Gastrocnemius medialis (tissue), 4 donors: ENCODE measurements at regions of chr20 and their contacts with region 1.

Region 1: DNA sequence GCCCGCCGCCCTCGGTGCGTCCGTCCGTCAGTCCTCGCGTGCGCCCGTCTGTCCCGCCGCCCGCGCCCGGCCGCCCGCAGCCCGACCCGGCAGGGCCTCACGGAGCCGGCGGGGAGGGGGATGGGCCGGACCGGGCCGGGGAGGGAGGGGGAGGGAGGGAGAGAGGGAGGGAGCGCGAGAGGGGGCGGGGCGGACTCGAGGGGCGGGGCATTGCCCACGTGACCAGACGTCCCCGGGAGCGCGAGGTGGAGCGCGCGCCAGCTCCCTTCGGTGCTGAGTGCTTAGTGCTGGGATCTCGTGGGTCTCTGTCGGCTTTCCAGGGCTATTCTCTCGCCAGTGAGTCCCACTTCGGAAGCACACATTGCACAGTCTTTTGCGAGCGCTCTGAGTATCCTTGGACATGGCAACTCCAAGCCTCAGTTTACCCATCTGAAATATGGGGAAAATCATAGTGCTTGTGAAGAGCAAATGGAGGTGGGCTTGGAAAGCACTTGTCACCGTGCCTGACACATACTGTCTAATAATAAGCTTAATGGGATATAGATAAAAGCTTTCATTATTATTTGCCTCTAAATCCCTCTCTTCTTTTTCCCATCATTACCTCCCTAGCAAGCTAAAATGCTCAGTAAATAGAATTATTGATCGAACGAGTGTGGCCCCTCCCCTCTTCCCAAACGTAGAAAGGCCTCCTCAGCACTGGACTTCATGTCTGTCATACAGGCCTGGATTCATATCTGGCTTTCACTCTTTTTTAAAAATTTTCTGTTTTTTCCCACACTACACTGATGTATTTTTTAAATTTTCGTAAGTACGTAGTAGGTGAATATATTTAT is at the start of gene NCOA6:
- DNase-seq: peak; percentile 86 to 90
- ATAC-seq: peak; percentile 81 to 86
- H3K4me3 ChIP-seq: peak within 1 kb of the TSS; percentile 76 to 93 (median 88)
- H3K27ac ChIP-seq: peak within 1 kb of the TSS; percentile 84 to 97 (median 94)
- H3K4me1 ChIP-seq: peaks cover 31 to 33% of the 10 kb centered on the region in 2 donors
- H3K27me3 ChIP-seq: no peaks in the 10 kb centered on the region
- CTCF ChIP-seq: no peak
- POLR2A ChIP-seq: peak in 1 of 2 donors; percentile 71
- total RNA-seq, gene NCOA6: 10.9 to 12.7 (median 11.6) TPM

Region 2: DNA sequence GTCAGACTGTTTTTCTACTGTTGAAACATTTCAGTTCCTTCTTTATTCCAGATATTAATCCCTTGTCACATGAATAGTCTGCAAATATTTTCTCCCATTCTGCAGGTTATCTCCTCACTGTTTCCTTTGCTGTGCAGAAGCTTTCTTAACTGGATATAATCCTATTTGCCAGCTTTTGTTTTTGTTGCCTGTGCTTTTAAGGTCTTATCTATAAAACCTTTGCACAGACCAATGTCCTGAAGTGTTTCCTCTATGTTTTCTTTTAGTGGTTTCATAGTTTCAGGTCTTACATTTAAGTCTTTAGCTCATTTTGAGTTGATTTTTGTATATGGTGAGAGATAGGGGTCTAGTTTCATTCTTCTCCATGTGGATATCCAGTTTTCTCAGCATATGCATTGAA is 19.5 kb before region 1 on chr20:
- in situ Hi-C with region 1: no loop called
- intact Hi-C with region 1: no loop called
- DNase-seq: no peak
- ATAC-seq: no peak
- H3K4me3 ChIP-seq: no peak overlapping the region
- H3K27ac ChIP-seq: no peak overlapping the region
- H3K4me1 ChIP-seq: peaks cover 0 to 4% of the 10 kb centered on the region in 2 donors
- H3K27me3 ChIP-seq: no peaks in the 10 kb centered on the region
- CTCF ChIP-seq: no peak
- POLR2A ChIP-seq: no peak

Region 3: DNA sequence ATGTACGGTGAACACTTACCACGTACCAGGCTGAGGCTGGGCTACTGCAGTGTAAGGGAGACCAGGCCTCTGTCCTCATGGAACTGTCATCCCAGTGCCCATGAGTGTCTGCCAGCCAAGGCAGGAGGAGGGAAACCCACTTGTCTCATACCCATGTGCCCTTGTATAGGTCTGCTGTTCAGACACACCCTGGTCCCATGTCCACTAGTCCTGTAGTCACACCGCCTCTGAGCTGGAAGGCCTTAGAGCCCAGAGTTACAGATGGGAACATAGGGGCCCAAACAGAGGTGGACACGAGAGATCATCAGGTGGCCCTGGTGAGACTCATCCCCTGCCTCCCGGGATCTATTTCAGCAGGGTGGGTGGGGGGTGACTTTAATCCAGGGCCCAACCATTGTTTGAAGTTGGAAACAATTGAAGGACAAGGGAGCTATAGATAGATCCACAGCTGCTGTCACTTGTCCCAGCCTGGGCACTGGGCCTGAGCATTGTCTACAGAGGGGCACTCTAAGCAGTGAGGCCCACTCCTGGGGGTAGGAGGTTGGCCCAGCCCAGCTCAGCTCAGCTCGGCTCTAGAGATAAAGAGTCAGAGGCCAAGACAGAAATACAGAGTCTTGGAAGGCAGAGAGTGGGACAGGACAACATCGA is 144.6 kb after region 1 on chr20:
- in situ Hi-C with region 1: no loop called
- intact Hi-C with region 1: no loop called
- DNase-seq: peak in 1 of 2 donors; percentile 29
- ATAC-seq: peak; percentile 16 to 19
- H3K4me3 ChIP-seq: no peak overlapping the region
- H3K27ac ChIP-seq: peak overlapping the region; percentile 49 to 72 (median 62)
- H3K4me1 ChIP-seq: peaks cover 11 to 19% of the 10 kb centered on the region in 2 donors
- H3K27me3 ChIP-seq: no peaks in the 10 kb centered on the region
- CTCF ChIP-seq: no peak
- POLR2A ChIP-seq: no peak

Region 4: DNA sequence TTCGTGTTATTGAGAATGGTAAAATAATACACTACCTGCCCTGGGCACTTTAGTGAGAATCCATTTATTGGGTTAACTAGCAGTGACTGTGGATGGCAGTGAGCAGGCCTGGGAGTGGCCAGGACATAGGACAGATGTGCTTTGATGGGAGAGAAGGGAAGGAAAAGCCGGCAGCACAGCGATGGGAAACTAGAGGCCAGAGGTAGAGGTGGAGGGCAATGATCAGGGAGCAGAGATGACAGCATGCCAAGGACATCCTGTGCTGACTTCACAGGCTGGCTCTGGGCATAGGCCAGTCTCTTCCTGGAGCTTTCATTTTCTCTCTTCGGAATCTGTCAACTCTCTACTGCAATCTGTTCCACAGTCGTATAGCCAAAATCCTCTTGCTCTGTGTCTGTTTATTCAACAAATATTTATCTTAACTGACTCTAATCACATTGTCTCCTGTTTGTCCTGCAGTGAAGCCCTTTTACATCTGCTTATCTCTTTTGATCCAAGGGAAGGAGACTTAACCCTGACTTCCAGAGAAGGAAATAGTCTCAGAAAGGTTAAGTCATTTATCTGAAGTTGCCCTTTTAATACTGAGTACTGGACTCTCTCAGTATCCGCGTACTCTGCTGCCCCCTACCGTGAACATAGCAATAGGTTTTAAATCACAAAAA is 382.3 kb after region 1 on chr20:
- in situ Hi-C with region 1: loop called in 2 of 4 experiments (anchors 10 to 25 kb)
- intact Hi-C with region 1: no loop called
- DNase-seq: peak; percentile 53 to 67
- ATAC-seq: peak; percentile 90 to 95
- H3K4me3 ChIP-seq: peak overlapping the region in 3 of 4 donors; percentile 1 to 37 (median 23)
- H3K27ac ChIP-seq: peak overlapping the region; percentile 55 to 77 (median 60)
- H3K4me1 ChIP-seq: no peaks in the 10 kb centered on the region
- H3K27me3 ChIP-seq: no peaks in the 10 kb centered on the region
- CTCF ChIP-seq: peak; percentile 77 to 85 (median 81)
- POLR2A ChIP-seq: no peak

Region 5: GRCh38 chr20:35277531-35278395 is 452.0 kb after region 1 on chr20 and contains the start of gene MMP24OS:
- in situ Hi-C with region 1: no loop called
- intact Hi-C with region 1: loop called (anchors 10 kb)
- DNase-seq: peak; percentile 82 to 90
- ATAC-seq: peak; percentile 94 to 95
- H3K4me3 ChIP-seq: peak within 1 kb of the TSS; percentile 80 to 99 (median 85)
- H3K27ac ChIP-seq: peak within 1 kb of the TSS; percentile 89 to 97 (median 97)
- H3K4me1 ChIP-seq: peaks cover 12 to 14% of the 10 kb centered on the region in 2 donors
- H3K27me3 ChIP-seq: no peaks in the 10 kb centered on the region
- CTCF ChIP-seq: peak in 2 of 5 experiments; percentile 30 to 35
- POLR2A ChIP-seq: peak; percentile 94 to 96
- total RNA-seq, gene MMP24OS: 3.8 to 18.4 (median 12.4) TPM

Region 6: DNA sequence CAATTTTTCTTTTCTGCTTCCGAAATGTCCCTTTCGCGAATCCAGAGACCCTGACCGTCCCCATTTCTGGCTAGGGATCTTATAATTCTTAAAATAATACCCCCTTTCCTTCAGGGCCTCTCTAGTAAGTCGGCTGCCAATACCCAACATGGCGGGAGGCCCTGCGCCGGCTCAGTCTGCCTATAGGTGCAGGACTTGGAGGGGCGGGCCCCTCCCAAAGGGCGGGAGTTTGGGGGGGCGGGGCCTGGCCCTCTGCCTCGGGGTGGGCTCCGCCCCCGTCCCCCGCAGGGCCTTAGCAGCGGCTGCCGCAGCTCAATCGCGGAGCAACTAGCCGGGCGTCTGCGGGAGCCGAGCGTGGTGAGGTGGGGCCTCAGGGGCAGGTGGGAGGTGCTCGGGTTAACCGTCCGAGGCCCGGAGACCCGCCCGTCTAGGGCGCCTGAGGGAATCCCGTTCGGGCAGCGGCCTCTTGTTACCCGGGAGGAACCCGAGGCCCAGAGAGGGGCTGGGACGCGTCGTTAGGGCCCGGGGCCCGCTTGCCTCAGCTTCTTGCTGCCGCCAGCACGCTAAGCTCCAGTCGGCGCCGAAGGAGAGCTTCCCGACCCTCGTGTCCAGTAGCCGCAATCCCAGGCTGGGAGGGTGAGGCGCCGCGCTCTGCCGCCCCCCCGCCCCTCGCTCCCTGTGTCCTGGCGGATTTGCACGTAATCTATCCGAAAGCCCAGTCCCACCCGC is 629.3 kb after region 1 on chr20 and contains the start of gene CEP250:
- in situ Hi-C with region 1: no loop called
- intact Hi-C with region 1: loop called (anchors 10 kb)
- DNase-seq: peak; percentile 84 to 90
- ATAC-seq: peak; percentile 92 to 94
- H3K4me3 ChIP-seq: peak within 1 kb of the TSS; percentile 69 to 99 (median 86)
- H3K27ac ChIP-seq: peak within 1 kb of the TSS; percentile 89 to 98 (median 94)
- H3K4me1 ChIP-seq: peaks cover 20 to 22% of the 10 kb centered on the region in 2 donors
- H3K27me3 ChIP-seq: no peaks in the 10 kb centered on the region
- CTCF ChIP-seq: no peak
- POLR2A ChIP-seq: peak; percentile 31 to 42
- total RNA-seq, gene CEP250: 10.9 to 13.9 (median 12.8) TPM